ENCODE measurements at regions of chr5 and their contacts with region 1.

Region 1: GRCh38 chr5:155728146-155728856 is 598.7 kb upstream of the SGCD start:
- DNase-seq: peak; percentile 78
- ATAC-seq: peak; percentile 69

Region 2: GRCh38 chr5:155136216-155136850 is 592.0 kb before region 1 on chr5:
- intact Hi-C with region 1: loop called (anchors 1 kb)
- DNase-seq: no peak
- ATAC-seq: peak; percentile 75

Region 3: GRCh38 chr5:155193029-155193428 is 535.3 kb before region 1 on chr5:
- intact Hi-C with region 1: loop called (anchors 1 kb)
- DNase-seq: no peak
- ATAC-seq: peak; percentile 85

Measured in Right ventricle myocardium inferior (tissue), 1 donor.